CD4-positive, alpha-beta memory T cell (primary cell): ENCODE measurements at regions of chr17 and their contacts with region 1.

Region 1: GRCh38 chr17:17859909-17860765 is 23.4 kb upstream of the SREBF1 start:
- DNase-seq: peak; percentile 61 to 75 (median 69)
- H3K4me3 ChIP-seq: no peak overlapping the region
- H3K4me3 Mint-ChIP-seq: no peak overlapping the region
- H3K27ac ChIP-seq: no peak overlapping the region
- H3K27ac Mint-ChIP-seq: peak overlapping the region in 3 of 7 donors; percentile 25 to 56 (median 29)
- H3K4me1 ChIP-seq: peaks cover 22% of the 10 kb centered on the region
- H3K4me1 Mint-ChIP-seq: peaks cover 11 to 44% (median 22%) of the 10 kb centered on the region in 4 donors
- H3K27me3 ChIP-seq: no peaks in the 10 kb centered on the region
- H3K27me3 Mint-ChIP-seq: no peaks in the 10 kb centered on the region

Region 2: GRCh38 chr17:17568749-17569195 is 291.4 kb before region 1 on chr17:
- CTCF ChIA-PET with region 1: no interaction called
- POLR2A ChIA-PET with region 1: no interaction called
- intact Hi-C with region 1: no loop called
- DNase-seq: peak in 4 of 5 donors; percentile 19 to 41 (median 27)
- H3K4me3 ChIP-seq: no peak overlapping the region
- H3K4me3 Mint-ChIP-seq: no peak overlapping the region
- H3K27ac ChIP-seq: no peak overlapping the region
- H3K27ac Mint-ChIP-seq: no peak overlapping the region
- H3K4me1 ChIP-seq: no peaks in the 10 kb centered on the region
- H3K4me1 Mint-ChIP-seq: peaks cover 0 to 5% (median 1%) of the 10 kb centered on the region in 4 donors
- H3K27me3 ChIP-seq: no peaks in the 10 kb centered on the region
- H3K27me3 Mint-ChIP-seq: no peaks in the 10 kb centered on the region

Region 3: DNA sequence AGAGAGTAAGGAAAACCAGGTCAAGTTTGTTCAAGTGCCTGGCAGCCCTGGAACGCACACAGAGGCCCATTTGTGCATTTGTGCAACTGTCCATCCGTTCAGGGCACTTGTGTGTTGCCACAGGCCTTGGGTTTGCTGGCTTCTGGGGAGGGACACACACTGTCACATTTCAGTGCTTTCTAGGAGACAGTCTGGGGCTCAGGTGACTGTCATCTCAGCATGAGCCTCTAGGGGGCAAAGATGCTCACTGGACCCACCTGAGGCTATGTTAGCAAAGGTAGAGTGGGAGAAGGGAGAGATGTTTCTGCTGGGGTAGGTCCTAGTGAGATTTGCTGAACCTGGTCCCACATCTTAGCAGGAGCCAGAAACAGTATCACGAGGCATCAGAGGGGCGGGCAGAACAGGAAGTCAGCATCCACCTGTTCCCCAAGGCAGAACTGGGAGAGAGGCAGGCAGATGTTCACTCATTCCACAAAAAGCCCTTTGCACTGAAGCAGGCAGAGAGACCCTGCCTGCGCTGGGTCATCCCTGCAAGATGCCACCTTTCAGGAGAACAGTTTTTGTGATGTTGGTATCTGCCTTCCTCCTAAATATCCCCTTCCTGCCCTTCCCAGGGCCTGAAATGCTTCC is 130.4 kb before region 1 on chr17:
- CTCF ChIA-PET with region 1: interaction called, 4 read pairs
- POLR2A ChIA-PET with region 1: no interaction called
- intact Hi-C with region 1: loop called (anchors 1 kb)
- DNase-seq: peak in 4 of 5 donors; percentile 46 to 56 (median 54)
- H3K4me3 ChIP-seq: no peak overlapping the region
- H3K4me3 Mint-ChIP-seq: no peak overlapping the region
- H3K27ac ChIP-seq: no peak overlapping the region
- H3K27ac Mint-ChIP-seq: peak overlapping the region in 3 of 7 donors; percentile 15 to 44 (median 29)
- H3K4me1 ChIP-seq: no peaks in the 10 kb centered on the region
- H3K4me1 Mint-ChIP-seq: peaks cover 7 to 18% (median 11%) of the 10 kb centered on the region in 4 donors
- H3K27me3 ChIP-seq: no peaks in the 10 kb centered on the region
- H3K27me3 Mint-ChIP-seq: no peaks in the 10 kb centered on the region

Region 4: DNA sequence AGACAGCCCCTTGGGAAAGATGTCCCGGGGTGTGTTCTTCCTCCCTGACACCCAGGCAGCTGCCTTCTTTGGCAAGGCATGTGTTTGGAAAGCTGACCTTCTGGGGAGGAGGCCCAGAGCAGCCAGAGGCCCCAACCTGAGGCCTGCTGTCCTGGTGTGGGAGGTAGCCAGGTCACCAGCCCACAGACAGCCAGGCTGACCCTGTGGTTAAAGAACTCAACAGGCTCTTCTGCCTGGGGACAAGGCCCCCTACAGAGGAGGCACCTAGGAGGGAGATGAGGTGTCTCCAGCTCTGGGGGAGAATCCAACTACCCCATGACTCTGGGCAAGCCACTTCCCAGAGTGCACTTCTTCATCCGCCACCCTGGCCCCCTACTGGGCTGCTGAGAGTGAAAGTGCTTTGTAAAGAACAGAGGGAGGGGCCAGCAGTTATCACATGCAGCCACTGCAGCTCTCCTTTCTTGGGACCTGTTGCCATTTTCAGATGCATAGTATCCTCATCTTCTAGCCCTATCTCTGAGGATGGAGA is 10.2 kb before region 1 on chr17:
- CTCF ChIA-PET with region 1: interaction called, 30 read pairs
- POLR2A ChIA-PET with region 1: interaction called, 5 read pairs
- intact Hi-C with region 1: no loop called
- DNase-seq: peak; percentile 64 to 80 (median 71)
- H3K4me3 ChIP-seq: peak overlapping the region in 1 of 2 donors; percentile 22
- H3K4me3 Mint-ChIP-seq: peak overlapping the region in 7 of 8 donors; percentile 32 to 81 (median 55)
- H3K27ac ChIP-seq: peak overlapping the region; percentile 73
- H3K27ac Mint-ChIP-seq: peak overlapping the region; percentile 93 to 97 (median 95)
- H3K4me1 ChIP-seq: peaks cover 54% of the 10 kb centered on the region
- H3K4me1 Mint-ChIP-seq: peaks cover 25 to 63% (median 48%) of the 10 kb centered on the region in 4 donors
- H3K27me3 ChIP-seq: no peaks in the 10 kb centered on the region
- H3K27me3 Mint-ChIP-seq: no peaks in the 10 kb centered on the region

Region 5: DNA sequence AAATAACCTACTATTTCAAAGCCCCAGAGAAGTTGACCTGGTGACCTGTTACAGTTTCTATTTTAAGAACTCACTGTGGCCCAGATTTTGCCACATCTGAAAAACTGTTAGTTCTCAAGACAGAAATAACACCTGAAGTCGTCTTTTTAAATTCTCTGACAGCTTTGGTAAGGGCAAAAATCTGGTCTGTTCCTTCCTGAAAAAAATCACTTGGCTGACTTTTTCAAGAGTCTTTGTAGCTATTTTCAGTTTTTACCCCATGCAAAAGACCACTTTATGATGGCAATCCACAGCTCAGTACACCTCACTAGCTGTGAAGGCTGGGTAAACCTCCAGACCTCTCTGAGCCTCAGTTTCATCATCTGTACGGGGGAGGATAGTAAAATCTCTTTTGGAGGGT is 37.3 kb after region 1 on chr17:
- CTCF ChIA-PET with region 1: no interaction called
- POLR2A ChIA-PET with region 1: no interaction called
- intact Hi-C with region 1: no loop called
- DNase-seq: no peak
- H3K4me3 ChIP-seq: no peak overlapping the region
- H3K4me3 Mint-ChIP-seq: no peak overlapping the region
- H3K27ac ChIP-seq: no peak overlapping the region
- H3K27ac Mint-ChIP-seq: peak overlapping the region in 1 of 7 donors; percentile 22
- H3K4me1 ChIP-seq: no peaks in the 10 kb centered on the region
- H3K4me1 Mint-ChIP-seq: peaks cover 0 to 3% (median under 1%) of the 10 kb centered on the region in 4 donors
- H3K27me3 ChIP-seq: no peaks in the 10 kb centered on the region
- H3K27me3 Mint-ChIP-seq: no peaks in the 10 kb centered on the region